ENCODE measurements at regions of chr2 and their contacts with region 1.

Region 1: GRCh38 chr2:191637182-191638078 is 40.5 kb upstream of the NABP1 start:
- DNase-seq: peak; percentile 95
- ATAC-seq: peak; percentile 96
- H3K4me3 ChIP-seq: peak overlapping the region in 2 of 3 experiments; percentile 25 to 27; a peak in 1 of 6 replicates
- H3K27ac ChIP-seq: peak overlapping the region; percentile 75
- H3K4me1 ChIP-seq: peaks cover 58% of the 10 kb centered on the region
- H3K27me3 ChIP-seq: no peaks in the 10 kb centered on the region
- CTCF ChIP-seq: no peak
- EP300 ChIP-seq: peak; percentile 46 to 98; a peak in 3 of 4 replicates
- POLR2A ChIP-seq: peak in 1 of 2 experiments; percentile 28; a peak in 1 of 4 replicates
- RAD21 ChIP-seq: no peak

Region 2: DNA sequence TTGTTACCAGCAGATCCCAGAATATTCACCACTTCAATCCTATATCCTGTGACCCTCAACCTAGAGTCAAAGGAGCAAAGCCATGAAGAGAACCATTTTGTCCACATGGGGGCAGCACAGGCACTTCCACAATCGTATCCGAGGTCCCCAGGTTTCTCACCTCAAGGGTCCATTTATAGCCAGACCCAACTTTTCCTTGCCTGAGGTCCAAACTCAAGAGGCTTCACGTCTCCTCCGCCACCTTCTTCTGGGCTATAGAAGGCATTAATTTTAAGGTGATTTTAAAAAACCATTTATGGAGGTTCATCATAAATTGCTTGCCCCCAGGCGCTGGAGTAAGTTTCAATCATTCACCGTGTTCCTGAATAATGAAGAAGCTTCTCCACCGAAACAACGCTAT is 71.1 kb before region 1 on chr2:
- CTCF ChIA-PET with region 1: no interaction called
- POLR2A ChIA-PET with region 1: no interaction called
- in situ Hi-C with region 1: no loop called
- intact Hi-C with region 1: loop called (anchors 5 kb)
- DNase-seq: peak; percentile 71
- ATAC-seq: peak; percentile 96
- H3K4me3 ChIP-seq: no peak overlapping the region
- H3K27ac ChIP-seq: no peak overlapping the region
- H3K4me1 ChIP-seq: peaks cover 11% of the 10 kb centered on the region
- H3K27me3 ChIP-seq: no peaks in the 10 kb centered on the region
- CTCF ChIP-seq: peak; percentile 88
- EP300 ChIP-seq: no peak
- POLR2A ChIP-seq: no peak
- RAD21 ChIP-seq: peak; percentile 75

Region 3: GRCh38 chr2:191625016-191625415 is 12.4 kb before region 1 on chr2:
- CTCF ChIA-PET with region 1: no interaction called
- POLR2A ChIA-PET with region 1: interaction called, 17 read pairs
- in situ Hi-C with region 1: no loop called
- intact Hi-C with region 1: loop called (anchors 2 kb)
- DNase-seq: peak; percentile 75
- ATAC-seq: peak; percentile 89
- H3K4me3 ChIP-seq: no peak overlapping the region
- H3K27ac ChIP-seq: no peak overlapping the region
- H3K4me1 ChIP-seq: peaks cover 13% of the 10 kb centered on the region
- H3K27me3 ChIP-seq: no peaks in the 10 kb centered on the region
- CTCF ChIP-seq: no peak
- EP300 ChIP-seq: peak in 1 of 2 experiments; percentile 56; a peak in 1 of 4 replicates
- POLR2A ChIP-seq: no peak
- RAD21 ChIP-seq: no peak

Region 4: DNA sequence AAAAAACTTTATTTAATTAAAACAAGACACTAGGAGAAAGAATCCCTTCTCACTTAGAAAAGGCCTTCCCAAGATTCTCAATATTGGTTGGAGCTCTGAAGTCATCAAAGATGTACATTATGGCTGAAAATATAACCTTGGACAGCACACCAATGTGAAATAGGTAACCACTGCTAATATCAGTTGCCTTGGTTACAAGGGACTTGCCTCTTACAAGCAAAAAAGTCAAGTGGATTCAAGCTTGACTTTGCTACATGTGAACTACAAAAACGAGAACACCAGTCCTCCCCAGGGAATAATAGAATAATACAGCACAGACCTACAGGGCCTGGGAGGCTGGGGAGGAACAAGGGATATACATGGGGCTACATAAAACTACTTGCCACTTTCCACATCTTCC is 86.6 kb after region 1 on chr2:
- CTCF ChIA-PET with region 1: no interaction called
- POLR2A ChIA-PET with region 1: no interaction called
- in situ Hi-C with region 1: no loop called
- intact Hi-C with region 1: no loop called
- DNase-seq: no peak
- ATAC-seq: no peak
- H3K4me3 ChIP-seq: no peak overlapping the region
- H3K27ac ChIP-seq: no peak overlapping the region
- H3K4me1 ChIP-seq: no peaks in the 10 kb centered on the region
- H3K27me3 ChIP-seq: no peaks in the 10 kb centered on the region
- CTCF ChIP-seq: no peak
- EP300 ChIP-seq: no peak
- POLR2A ChIP-seq: no peak
- RAD21 ChIP-seq: no peak

Region 5: GRCh38 chr2:191869178-191869577 is 231.7 kb after region 1 on chr2:
- CTCF ChIA-PET with region 1: no interaction called
- POLR2A ChIA-PET with region 1: no interaction called
- in situ Hi-C with region 1: no loop called
- intact Hi-C with region 1: loop called (anchors 5 kb)
- DNase-seq: peak; percentile 67
- ATAC-seq: peak; percentile 8; the same call in 1 of the 3 replicates
- H3K4me3 ChIP-seq: no peak overlapping the region
- H3K27ac ChIP-seq: peak overlapping the region; percentile 1
- H3K4me1 ChIP-seq: peaks cover 69% of the 10 kb centered on the region
- H3K27me3 ChIP-seq: no peaks in the 10 kb centered on the region
- CTCF ChIP-seq: peak; percentile 74
- EP300 ChIP-seq: peak in 1 of 2 experiments; percentile 64; a peak in 1 of 4 replicates
- POLR2A ChIP-seq: no peak
- RAD21 ChIP-seq: peak; percentile 38; the same call in 1 of the 2 replicates